Aorta (tissue), 5 donors: ENCODE measurements at regions of chr14 and their contacts with region 1.

Region 1: GRCh38 chr14:75577729-75578101 is 705 bp upstream of the FLVCR2 start:
- DNase-seq: peak; percentile 91 to 93
- ATAC-seq: peak; percentile 93
- H3K4me3 ChIP-seq: peak overlapping the region; percentile 56 to 81
- H3K27ac ChIP-seq: peak overlapping the region in 1 of 2 donors; percentile 56
- H3K4me1 ChIP-seq: peaks cover 0 to 2% of the 10 kb centered on the region in 2 donors
- H3K27me3 ChIP-seq: no peaks in the 10 kb centered on the region

Region 2: DNA sequence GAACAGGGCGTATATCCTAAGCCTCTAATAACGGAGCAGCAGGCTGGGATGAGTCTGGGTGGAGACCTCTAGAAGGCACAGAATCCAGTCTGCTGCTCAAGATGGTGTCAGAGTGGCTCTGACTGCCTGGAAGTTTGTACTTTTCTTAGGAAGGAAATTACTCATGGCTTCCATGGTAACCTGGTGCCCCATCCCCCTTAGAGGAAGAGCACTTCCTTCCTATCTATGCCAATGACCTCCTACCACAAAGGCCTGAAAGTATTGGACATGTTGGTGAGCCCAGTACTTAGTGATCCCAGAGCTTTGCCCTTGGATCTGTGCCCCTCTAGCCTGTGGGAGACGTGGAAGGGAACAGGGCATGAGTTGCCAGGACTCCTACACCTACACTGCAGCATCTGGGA is 53.9 kb before region 1 on chr14:
- intact Hi-C with region 1: no loop called
- DNase-seq: no peak
- ATAC-seq: peak; percentile 44
- H3K4me3 ChIP-seq: no peak overlapping the region
- H3K27ac ChIP-seq: no peak overlapping the region
- H3K4me1 ChIP-seq: no peaks in the 10 kb centered on the region
- H3K27me3 ChIP-seq: no peaks in the 10 kb centered on the region

Region 3: DNA sequence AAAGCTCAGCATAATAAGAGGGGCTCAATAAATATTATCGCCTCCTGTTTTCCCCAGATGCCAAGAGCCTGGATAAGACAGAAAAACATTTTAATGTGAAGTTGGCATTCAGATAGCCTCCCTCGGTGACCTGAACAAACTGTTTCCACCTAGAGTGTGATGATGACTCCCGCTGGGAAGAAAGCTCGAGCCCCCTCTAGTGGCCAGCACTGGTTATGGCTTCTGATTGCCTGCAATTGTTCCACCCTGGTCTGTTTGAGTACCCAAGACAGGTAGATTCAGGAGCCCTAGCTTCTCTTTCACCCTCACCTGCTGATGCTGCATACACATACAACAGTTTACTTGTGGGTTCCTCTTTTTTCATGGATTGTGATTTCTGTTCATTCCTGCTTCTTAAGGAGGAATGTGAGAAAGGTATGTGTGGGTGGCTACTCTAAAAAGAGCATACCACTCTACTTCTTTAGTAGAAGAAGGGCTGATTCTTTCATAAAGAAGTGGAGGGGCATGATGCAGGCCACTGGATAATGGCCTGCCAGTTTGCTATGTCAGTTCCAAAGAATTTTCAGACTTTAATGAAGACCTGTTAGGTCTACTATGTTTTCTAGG is 76.5 kb after region 1 on chr14:
- intact Hi-C with region 1: loop called (anchors 1 to 2 kb)
- DNase-seq: peak; percentile 83 to 92
- ATAC-seq: peak; percentile 91
- H3K4me3 ChIP-seq: no peak overlapping the region
- H3K27ac ChIP-seq: no peak overlapping the region
- H3K4me1 ChIP-seq: no peaks in the 10 kb centered on the region
- H3K27me3 ChIP-seq: no peaks in the 10 kb centered on the region